Calu3 (cell line): ENCODE measurements at regions of chrX and their contacts with region 1.

Region 1: DNA sequence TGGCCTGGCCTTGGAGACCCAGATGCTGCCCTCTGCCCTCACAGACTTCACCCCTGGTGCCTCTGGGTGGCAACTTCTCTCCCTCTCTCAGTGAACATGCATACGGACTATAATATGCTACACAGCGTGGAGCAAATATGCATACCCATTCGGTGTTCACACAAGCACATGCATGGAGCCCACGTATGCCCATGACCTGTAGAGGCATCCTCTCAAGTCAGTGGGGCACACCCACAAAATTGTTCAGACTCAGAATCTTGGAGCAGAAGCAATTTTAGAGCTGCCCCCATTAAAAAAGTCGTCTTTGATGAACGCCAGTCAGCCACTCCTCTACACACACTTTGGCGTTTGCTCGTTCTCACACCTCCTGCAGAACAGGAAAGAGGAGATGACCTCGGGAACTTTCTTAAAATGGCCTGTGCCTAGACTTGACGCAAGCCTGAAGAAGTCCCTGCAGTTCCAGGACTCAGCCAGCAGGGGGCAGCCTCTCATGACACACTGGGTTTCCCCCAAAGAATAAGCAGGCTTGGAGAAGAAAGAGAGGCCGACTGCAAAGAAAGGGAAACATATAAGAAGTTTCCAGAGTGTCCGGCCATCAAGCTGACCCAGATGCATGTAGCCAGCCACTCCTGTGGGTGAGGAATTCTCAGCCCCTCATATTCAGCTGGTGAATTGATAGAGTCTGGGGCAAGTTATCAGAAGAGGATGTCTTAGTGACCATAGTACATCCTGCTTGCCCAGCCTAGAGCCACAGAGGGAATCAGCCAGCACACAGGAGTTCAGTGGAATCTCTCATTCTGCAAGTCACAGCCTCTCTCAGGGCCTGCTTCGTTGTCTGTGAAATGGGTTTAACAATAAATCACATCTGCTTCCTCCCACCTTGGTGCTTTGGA is 17.3 kb downstream of the APLN start:
- DNase-seq: peak; percentile 70
- H3K4me3 Mint-ChIP-seq: no peak overlapping the region
- H3K27ac Mint-ChIP-seq: no peak overlapping the region
- H3K4me1 Mint-ChIP-seq: no peaks in the 10 kb centered on the region
- H3K27me3 Mint-ChIP-seq: peaks cover 18% of the 10 kb centered on the region
- CTCF ChIP-seq: peak; percentile 88

Region 2: GRCh38 chrX:129726307-129727111 is 89.0 kb after region 1 on chrX:
- CTCF ChIA-PET with region 1: interaction called, 7 read pairs
- intact Hi-C with region 1: loop called (anchors 1 kb)
- DNase-seq: peak; percentile 68
- H3K4me3 Mint-ChIP-seq: no peak overlapping the region
- H3K27ac Mint-ChIP-seq: no peak overlapping the region
- H3K4me1 Mint-ChIP-seq: no peaks in the 10 kb centered on the region
- H3K27me3 Mint-ChIP-seq: peaks cover 65% of the 10 kb centered on the region
- CTCF ChIP-seq: peak; percentile 55